ENCODE measurements at regions of chr18 and their contacts with region 1.

Region 1: GRCh38 chr18:27778441-27778840 is 398.5 kb downstream of the CDH2 start:
- DNase-seq: no peak
- ATAC-seq: no peak
- H3K4me3 ChIP-seq: no peak overlapping the region
- H3K4me3 Mint-ChIP-seq: no peak overlapping the region
- H3K27ac ChIP-seq: no peak overlapping the region
- H3K27ac Mint-ChIP-seq: no peak overlapping the region
- H3K4me1 ChIP-seq: no peaks in the 10 kb centered on the region
- H3K4me1 Mint-ChIP-seq: no peaks in the 10 kb centered on the region
- H3K27me3 ChIP-seq: no peaks in the 10 kb centered on the region
- H3K27me3 Mint-ChIP-seq: no peaks in the 10 kb centered on the region
- CTCF ChIP-seq: no peak

Region 2: DNA sequence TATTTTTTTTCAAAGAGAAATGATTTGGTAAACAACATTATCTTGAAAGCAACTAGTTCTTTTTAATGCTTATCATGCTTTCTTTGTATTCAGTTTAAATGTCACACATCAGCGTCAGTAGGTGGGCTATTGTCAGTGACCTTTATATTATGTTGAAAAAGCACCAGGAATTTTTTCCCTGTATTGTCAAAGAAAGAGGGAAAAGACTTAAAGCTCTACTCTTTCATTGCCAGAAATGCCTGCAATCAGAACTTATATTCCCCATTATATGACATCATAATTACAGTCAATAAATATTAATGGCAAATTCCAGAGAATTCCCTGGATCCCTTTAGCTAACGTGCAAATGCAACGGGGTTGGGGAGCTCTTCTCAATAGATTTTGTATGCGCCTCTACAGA is 44.6 kb after region 1 on chr18:
- CTCF ChIA-PET with region 1: no interaction called
- POLR2A ChIA-PET with region 1: no interaction called
- intact Hi-C with region 1: no loop called
- DNase-seq: no peak
- ATAC-seq: no peak
- H3K4me3 ChIP-seq: no peak overlapping the region
- H3K4me3 Mint-ChIP-seq: no peak overlapping the region
- H3K27ac ChIP-seq: no peak overlapping the region
- H3K27ac Mint-ChIP-seq: no peak overlapping the region
- H3K4me1 ChIP-seq: no peaks in the 10 kb centered on the region
- H3K4me1 Mint-ChIP-seq: no peaks in the 10 kb centered on the region
- H3K27me3 ChIP-seq: no peaks in the 10 kb centered on the region
- H3K27me3 Mint-ChIP-seq: no peaks in the 10 kb centered on the region
- CTCF ChIP-seq: no peak

Region 3: DNA sequence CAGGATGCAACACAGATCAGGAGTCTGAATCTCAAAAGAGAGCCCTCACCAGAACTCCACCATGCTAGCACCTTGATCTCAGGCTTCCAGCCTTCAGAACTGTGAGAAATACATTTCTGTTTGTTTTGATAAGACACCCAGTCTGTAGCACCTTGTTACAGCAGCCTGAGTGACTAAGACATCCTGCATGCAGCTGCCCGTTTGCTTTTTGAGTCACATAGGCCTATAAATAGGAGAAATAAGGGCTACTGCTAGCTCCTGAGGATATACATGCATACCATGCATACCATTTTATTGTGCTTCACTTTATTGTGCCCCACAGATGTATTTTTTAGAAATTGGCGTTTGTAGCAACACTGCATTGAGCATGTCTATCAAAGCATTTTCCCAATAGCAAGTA is 60.7 kb after region 1 on chr18:
- CTCF ChIA-PET with region 1: no interaction called
- POLR2A ChIA-PET with region 1: no interaction called
- intact Hi-C with region 1: loop called in 1 of 2 experiments (anchors 10 kb)
- DNase-seq: no peak
- ATAC-seq: no peak
- H3K4me3 ChIP-seq: no peak overlapping the region
- H3K4me3 Mint-ChIP-seq: no peak overlapping the region
- H3K27ac ChIP-seq: no peak overlapping the region
- H3K27ac Mint-ChIP-seq: no peak overlapping the region
- H3K4me1 ChIP-seq: no peaks in the 10 kb centered on the region
- H3K4me1 Mint-ChIP-seq: no peaks in the 10 kb centered on the region
- H3K27me3 ChIP-seq: no peaks in the 10 kb centered on the region
- H3K27me3 Mint-ChIP-seq: no peaks in the 10 kb centered on the region
- CTCF ChIP-seq: no peak